RWPE1 (cell line): ENCODE measurements at regions of chr11 and their contacts with region 1.

Region 1: DNA sequence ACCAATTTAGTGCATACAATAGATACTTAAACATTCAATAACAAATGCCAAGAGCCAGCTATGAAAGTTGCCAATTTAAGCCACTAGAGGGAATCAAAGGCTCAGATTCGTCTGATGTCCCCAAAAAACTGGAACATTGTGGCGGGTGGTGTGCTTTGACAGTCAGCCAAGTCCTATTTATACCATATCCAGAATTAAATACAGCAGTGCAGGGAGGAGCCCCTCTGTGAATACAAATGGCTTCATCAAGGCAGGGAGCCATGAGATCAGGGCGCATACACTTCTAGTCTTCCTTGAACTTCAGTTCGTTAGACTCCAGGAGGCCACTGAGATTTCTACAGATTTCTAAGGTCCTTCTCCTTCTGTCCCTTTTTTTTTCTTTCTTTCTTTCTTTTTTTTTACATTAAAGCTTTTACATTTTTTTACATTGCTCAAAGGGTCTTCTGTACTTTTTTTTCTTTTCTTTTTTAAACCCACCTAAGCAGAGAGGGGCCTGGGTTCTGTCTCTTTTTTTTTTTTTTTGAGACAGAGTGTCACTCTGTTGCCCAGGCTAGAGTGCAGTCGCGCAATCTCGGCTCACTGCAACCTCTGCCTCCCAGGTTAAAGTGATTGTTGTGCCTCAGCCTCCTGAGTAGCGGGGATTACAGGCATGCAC is 41.5 kb upstream of the HSPA8 start:
- DNase-seq: peak; percentile 34
- H3K27ac ChIP-seq: peak overlapping the region; percentile 30; the same call in 1 of the 2 replicates
- CTCF ChIP-seq: peak; percentile 78

Region 2: GRCh38 chr11:123116486-123116885 is 13.0 kb after region 1 on chr11:
- CTCF ChIA-PET with region 1: no interaction called
- POLR2A ChIA-PET with region 1: no interaction called
- DNase-seq: no peak
- H3K27ac ChIP-seq: no peak overlapping the region
- CTCF ChIP-seq: no peak

Region 3: GRCh38 chr11:123261345-123262106 is 158.1 kb after region 1 on chr11:
- CTCF ChIA-PET with region 1: interaction called, 10 read pairs
- POLR2A ChIA-PET with region 1: no interaction called
- DNase-seq: peak; percentile 70
- H3K27ac ChIP-seq: no peak overlapping the region
- CTCF ChIP-seq: peak; percentile 90